Endothelial cell of umbilical vein (primary cell): ENCODE measurements at regions of chr19 and their contacts with region 1.

Region 1: GRCh38 chr19:44626048-44626624 is 12.8 kb downstream of the IGSF23 start:
- DNase-seq: peak; percentile 93
- H3K4me3 ChIP-seq: no peak overlapping the region
- H3K27ac ChIP-seq: peak overlapping the region; percentile 73
- H3K4me1 ChIP-seq: peaks cover 31% of the 10 kb centered on the region
- H3K27me3 ChIP-seq: no peaks in the 10 kb centered on the region
- CTCF ChIP-seq: no peak
- POLR2A ChIP-seq: peak; percentile 60

Region 2: GRCh38 chr19:44613295-44614178 is 12.6 kb before region 1 on chr19 and contains the start of gene IGSF23:
- CTCF ChIA-PET with region 1: interaction called, 4 read pairs
- POLR2A ChIA-PET with region 1: interaction called, 11 read pairs
- dilution Hi-C with region 1: no loop called
- intact Hi-C with region 1: no loop called
- DNase-seq: no peak
- H3K4me3 ChIP-seq: no peak within 1 kb of the TSS
- H3K27ac ChIP-seq: no peak within 1 kb of the TSS
- H3K4me1 ChIP-seq: peaks cover 10% of the 10 kb centered on the region
- H3K27me3 ChIP-seq: no peaks in the 10 kb centered on the region
- CTCF ChIP-seq: no peak
- POLR2A ChIP-seq: no peak
- total RNA-seq, gene IGSF23: 0.35 TPM in 1 of 2 replicates, not detected in the other

Region 3: GRCh38 chr19:44666852-44667556 is 40.9 kb after region 1 on chr19:
- CTCF ChIA-PET with region 1: no interaction called
- POLR2A ChIA-PET with region 1: no interaction called
- dilution Hi-C with region 1: no loop called
- intact Hi-C with region 1: no loop called
- DNase-seq: no peak
- H3K4me3 ChIP-seq: no peak overlapping the region
- H3K27ac ChIP-seq: no peak overlapping the region
- H3K4me1 ChIP-seq: no peaks in the 10 kb centered on the region
- H3K27me3 ChIP-seq: no peaks in the 10 kb centered on the region
- CTCF ChIP-seq: no peak
- POLR2A ChIP-seq: peak; percentile 54

Region 4: GRCh38 chr19:44955587-44956439 is 329.7 kb after region 1 on chr19:
- CTCF ChIA-PET with region 1: no interaction called
- POLR2A ChIA-PET with region 1: no interaction called
- dilution Hi-C with region 1: no loop called
- intact Hi-C with region 1: no loop called
- DNase-seq: peak; percentile 7
- H3K4me3 ChIP-seq: peak overlapping the region; percentile 87 to 90 (median 88)
- H3K27ac ChIP-seq: peak overlapping the region; percentile 56
- H3K4me1 ChIP-seq: peaks cover 15% of the 10 kb centered on the region
- H3K27me3 ChIP-seq: no peaks in the 10 kb centered on the region
- CTCF ChIP-seq: no peak
- POLR2A ChIP-seq: no peak